Dendritic cell treated with granulocyte-macrophage colony-stimulating factor and Interleukin-4, amounts not matched to agents 40 ng/mL and 50 ng/mL, for 4 days (primary cell): ENCODE measurements at regions of chr15 and their contacts with region 1.

Region 1: GRCh38 chr15:40440743-40441564 is at the start of gene BAHD1:
- H3K4me3 Mint-ChIP-seq: peak within 1 kb of the TSS; percentile 84
- H3K27ac Mint-ChIP-seq: peak within 1 kb of the TSS; percentile 70
- H3K4me1 Mint-ChIP-seq: peaks cover 69% of the 10 kb centered on the region
- H3K27me3 Mint-ChIP-seq: peaks cover 54% of the 10 kb centered on the region

Region 2: GRCh38 chr15:40379853-40380252 is 61.1 kb before region 1 on chr15:
- intact Hi-C with region 1: no loop called
- H3K4me3 Mint-ChIP-seq: no peak overlapping the region
- H3K27ac Mint-ChIP-seq: peak overlapping the region; percentile 49
- H3K4me1 Mint-ChIP-seq: peaks cover 40% of the 10 kb centered on the region
- H3K27me3 Mint-ChIP-seq: no peaks in the 10 kb centered on the region

Region 3: GRCh38 chr15:40506964-40507571 is 66.1 kb after region 1 on chr15:
- intact Hi-C with region 1: loop called (anchors 10 kb)
- H3K4me3 Mint-ChIP-seq: peak overlapping the region; percentile 54
- H3K27ac Mint-ChIP-seq: no peak overlapping the region
- H3K4me1 Mint-ChIP-seq: peaks cover 25% of the 10 kb centered on the region
- H3K27me3 Mint-ChIP-seq: peaks cover 68% of the 10 kb centered on the region

Region 4: GRCh38 chr15:40613080-40613479 is 172.1 kb after region 1 on chr15:
- intact Hi-C with region 1: no loop called
- H3K4me3 Mint-ChIP-seq: no peak overlapping the region
- H3K27ac Mint-ChIP-seq: no peak overlapping the region
- H3K4me1 Mint-ChIP-seq: no peaks in the 10 kb centered on the region
- H3K27me3 Mint-ChIP-seq: no peaks in the 10 kb centered on the region